ENCODE measurements at regions of chr1 and their contacts with region 1.

Region 1: DNA sequence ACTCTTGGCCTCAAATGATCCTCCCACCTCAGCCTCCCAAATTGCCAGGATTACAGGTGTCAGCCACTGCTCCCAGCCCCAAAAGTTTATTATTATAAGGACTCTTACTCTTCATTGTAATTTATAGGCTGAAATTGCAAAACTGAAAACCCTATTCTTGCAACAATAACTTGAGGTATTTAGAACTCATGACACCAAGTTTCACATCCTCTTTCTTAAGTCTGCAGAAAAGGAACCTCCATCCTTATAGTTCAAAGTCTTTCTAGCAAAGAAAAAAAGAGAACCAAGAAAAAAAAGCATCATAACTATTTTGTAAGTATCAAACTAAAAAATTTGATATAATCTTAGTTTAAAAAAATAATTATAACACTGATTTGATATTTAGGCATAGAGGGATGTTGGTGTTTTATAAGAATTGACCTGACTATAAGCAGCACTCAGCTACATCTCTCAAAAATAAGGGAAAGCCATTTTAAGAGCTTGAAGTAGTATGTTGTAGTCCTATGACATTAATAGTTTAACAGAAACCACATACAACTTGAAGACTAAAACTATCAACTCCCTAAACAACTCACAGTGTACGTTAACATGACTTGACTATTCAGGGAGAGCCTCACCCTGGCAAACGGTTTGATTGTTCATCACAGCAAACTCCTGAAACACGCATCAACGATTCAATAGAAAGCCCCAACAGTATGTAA is 122.4 kb downstream of the AKT3 start:
- DNase-seq: peak; percentile 66
- ATAC-seq: peak; percentile 90
- H3K4me3 ChIP-seq: peak overlapping the region; percentile 29; the same call in 1 of the 2 replicates
- H3K27ac ChIP-seq: peak overlapping the region; percentile 74
- H3K4me1 ChIP-seq: peaks cover 42% of the 10 kb centered on the region
- H3K27me3 ChIP-seq: no peaks in the 10 kb centered on the region
- CTCF ChIP-seq: no peak
- EP300 ChIP-seq: peak; percentile 74 to 78; a peak in 3 of 4 replicates
- POLR2A ChIP-seq: no peak
- RAD21 ChIP-seq: no peak

Region 2: DNA sequence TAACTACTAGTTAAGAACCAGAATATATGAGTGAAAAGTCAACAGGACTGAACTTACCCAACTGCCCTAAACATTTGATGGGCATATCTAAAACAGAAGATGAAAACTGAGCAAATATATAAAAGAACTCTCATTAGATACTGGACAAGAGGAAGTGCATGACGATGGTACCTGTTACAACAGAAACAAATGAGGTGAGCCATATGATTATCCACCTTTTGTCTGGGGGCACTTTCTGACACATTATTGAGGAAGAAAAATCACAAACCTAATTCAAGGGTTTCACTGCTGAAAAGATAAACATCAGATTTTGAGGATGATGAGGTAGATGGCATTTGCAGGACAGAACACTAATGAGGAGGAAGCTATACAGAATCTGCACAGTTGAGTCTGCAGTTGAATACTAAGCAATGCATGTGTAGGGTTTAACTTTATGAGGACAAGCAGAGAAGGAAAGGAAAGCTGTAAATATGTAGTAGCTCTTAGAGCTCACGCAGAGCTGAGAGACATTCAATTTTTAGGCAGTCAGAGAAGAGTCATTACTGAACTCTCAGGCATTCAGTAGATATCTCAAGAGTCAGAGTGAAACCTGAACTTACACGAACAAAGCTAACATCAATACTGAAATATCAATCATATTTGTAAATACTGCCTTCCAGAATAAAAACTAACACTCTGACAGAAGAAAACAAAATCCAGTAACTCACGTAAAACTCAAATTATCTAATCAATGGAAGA is 139.7 kb before region 1 on chr1:
- CTCF ChIA-PET with region 1: no interaction called
- POLR2A ChIA-PET with region 1: no interaction called
- RAD21 ChIA-PET with region 1: no interaction called
- SMC1A ChIA-PET with region 1: no interaction called
- in situ Hi-C with region 1: no loop called
- intact Hi-C with region 1: loop called (anchors 5 kb)
- DNase-seq: peak; percentile 60
- ATAC-seq: peak; percentile 90
- H3K4me3 ChIP-seq: no peak overlapping the region
- H3K27ac ChIP-seq: peak overlapping the region; percentile 65
- H3K4me1 ChIP-seq: peaks cover 19% of the 10 kb centered on the region
- H3K27me3 ChIP-seq: no peaks in the 10 kb centered on the region
- CTCF ChIP-seq: no peak
- EP300 ChIP-seq: no peak
- POLR2A ChIP-seq: no peak
- RAD21 ChIP-seq: no peak

Region 3: GRCh38 chr1:243598433-243598832 is 129.2 kb before region 1 on chr1:
- CTCF ChIA-PET with region 1: no interaction called
- POLR2A ChIA-PET with region 1: no interaction called
- RAD21 ChIA-PET with region 1: no interaction called
- SMC1A ChIA-PET with region 1: no interaction called
- in situ Hi-C with region 1: no loop called
- intact Hi-C with region 1: no loop called
- DNase-seq: no peak
- ATAC-seq: no peak
- H3K4me3 ChIP-seq: no peak overlapping the region
- H3K27ac ChIP-seq: no peak overlapping the region
- H3K4me1 ChIP-seq: peaks cover 14% of the 10 kb centered on the region; the same call in 1 of the 2 replicates
- H3K27me3 ChIP-seq: no peaks in the 10 kb centered on the region
- CTCF ChIP-seq: no peak
- EP300 ChIP-seq: no peak
- POLR2A ChIP-seq: no peak
- RAD21 ChIP-seq: no peak

Region 4: DNA sequence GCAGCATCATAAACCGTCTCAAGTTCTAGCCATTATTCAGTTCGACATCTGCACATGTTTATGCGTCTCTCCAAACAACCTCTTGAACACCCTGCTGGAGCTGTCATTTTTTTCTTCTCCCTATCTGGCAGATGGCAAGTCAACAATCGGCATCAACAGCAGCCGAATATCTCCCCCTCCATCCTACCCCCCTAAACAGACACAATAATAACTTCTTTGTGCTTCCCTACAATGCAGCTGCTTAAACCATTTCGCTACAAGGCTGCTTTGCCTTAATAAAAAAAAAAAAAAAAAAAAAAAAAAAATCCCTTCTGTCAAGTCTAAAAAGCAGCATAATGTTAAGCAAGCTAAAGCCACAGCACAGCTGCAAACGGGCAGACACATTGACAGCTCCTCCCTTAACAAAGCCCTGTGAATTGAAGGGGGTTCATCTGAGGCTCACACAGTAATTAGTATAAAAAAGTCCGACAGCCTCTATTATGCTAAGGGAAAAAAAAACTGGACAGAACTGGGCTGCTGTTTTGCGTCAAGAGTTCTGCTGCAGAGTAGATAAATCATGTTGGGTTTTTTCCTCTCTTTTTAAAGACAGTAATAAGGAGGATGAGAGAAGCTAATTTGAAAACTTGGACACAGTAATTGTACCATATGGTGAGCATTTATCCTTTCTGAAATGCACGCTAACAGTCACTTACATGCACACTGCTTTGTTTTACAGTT is 14.0 kb before region 1 on chr1:
- CTCF ChIA-PET with region 1: interaction called, 9 read pairs
- POLR2A ChIA-PET with region 1: interaction called, 3 read pairs
- RAD21 ChIA-PET with region 1: interaction called, 4 read pairs
- SMC1A ChIA-PET with region 1: interaction called, 25 read pairs
- in situ Hi-C with region 1: no loop called
- intact Hi-C with region 1: no loop called
- DNase-seq: no peak
- ATAC-seq: no peak
- H3K4me3 ChIP-seq: no peak overlapping the region
- H3K27ac ChIP-seq: no peak overlapping the region
- H3K4me1 ChIP-seq: no peaks in the 10 kb centered on the region
- H3K27me3 ChIP-seq: no peaks in the 10 kb centered on the region
- CTCF ChIP-seq: no peak
- EP300 ChIP-seq: no peak
- POLR2A ChIP-seq: no peak
- RAD21 ChIP-seq: no peak

Region 5: DNA sequence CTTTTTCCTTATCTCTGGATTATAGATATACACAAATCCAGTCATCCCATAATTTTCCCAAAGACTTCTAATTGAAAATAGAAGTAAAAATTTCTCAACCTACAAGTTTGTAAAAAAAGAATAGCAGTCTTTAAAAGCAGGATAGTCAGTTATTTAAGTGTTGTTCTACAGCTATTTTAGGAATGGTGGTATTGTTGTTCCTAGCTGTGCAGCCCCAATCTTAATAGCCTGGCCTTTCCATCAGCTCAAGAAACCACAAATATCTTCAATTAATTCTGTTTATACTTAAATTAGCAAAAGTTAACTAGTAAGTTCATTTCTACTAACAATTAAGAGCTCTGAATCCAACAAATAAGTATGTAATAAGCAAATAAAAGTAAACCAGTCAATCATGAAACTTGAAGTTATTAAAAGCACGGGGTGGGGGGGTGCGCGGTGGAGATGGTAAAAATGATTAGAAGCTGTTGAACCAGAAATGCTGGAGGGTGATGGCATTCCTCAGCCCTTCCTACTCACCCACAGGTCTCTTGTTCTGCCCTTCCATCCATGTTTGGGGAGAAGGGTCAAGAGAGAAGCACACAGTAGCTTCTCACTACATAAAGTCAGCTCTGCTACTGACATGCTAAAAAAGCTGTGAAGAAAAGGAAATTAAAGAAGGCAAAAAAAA is 58.7 kb after region 1 on chr1:
- CTCF ChIA-PET with region 1: no interaction called
- POLR2A ChIA-PET with region 1: no interaction called
- RAD21 ChIA-PET with region 1: no interaction called
- SMC1A ChIA-PET with region 1: no interaction called
- in situ Hi-C with region 1: no loop called
- intact Hi-C with region 1: no loop called
- DNase-seq: no peak
- ATAC-seq: no peak
- H3K4me3 ChIP-seq: no peak overlapping the region
- H3K27ac ChIP-seq: no peak overlapping the region
- H3K4me1 ChIP-seq: no peaks in the 10 kb centered on the region
- H3K27me3 ChIP-seq: no peaks in the 10 kb centered on the region
- CTCF ChIP-seq: no peak
- EP300 ChIP-seq: no peak
- POLR2A ChIP-seq: no peak
- RAD21 ChIP-seq: no peak

Region 6: DNA sequence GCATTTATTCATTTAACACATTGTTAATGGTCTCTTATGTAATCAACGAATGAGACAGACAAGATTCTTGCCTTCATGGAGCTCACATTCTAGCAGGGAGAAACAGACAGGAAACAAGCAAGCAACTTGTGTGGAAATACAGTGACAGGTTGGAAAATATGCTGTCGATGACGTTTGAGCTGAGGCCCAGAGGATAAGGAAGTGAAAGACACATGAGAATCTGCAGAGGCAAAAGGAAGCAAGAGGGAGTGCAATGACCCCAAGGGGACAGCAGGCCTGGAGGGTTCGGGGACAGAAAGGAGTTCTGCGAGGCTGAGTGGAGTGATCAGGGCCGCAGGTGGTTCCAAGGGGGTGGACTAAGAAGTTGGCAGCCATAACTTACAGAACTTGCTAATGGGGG is 183.0 kb after region 1 on chr1:
- CTCF ChIA-PET with region 1: no interaction called
- POLR2A ChIA-PET with region 1: no interaction called
- RAD21 ChIA-PET with region 1: no interaction called
- SMC1A ChIA-PET with region 1: no interaction called
- in situ Hi-C with region 1: no loop called
- intact Hi-C with region 1: no loop called
- DNase-seq: no peak
- ATAC-seq: peak; percentile 27; the same call in 2 of the 3 replicates
- H3K4me3 ChIP-seq: no peak overlapping the region
- H3K27ac ChIP-seq: no peak overlapping the region
- H3K4me1 ChIP-seq: no peaks in the 10 kb centered on the region
- H3K27me3 ChIP-seq: no peaks in the 10 kb centered on the region; a peak in 1 of 4 replicates
- CTCF ChIP-seq: no peak
- EP300 ChIP-seq: no peak
- POLR2A ChIP-seq: no peak
- RAD21 ChIP-seq: no peak

Region 7: DNA sequence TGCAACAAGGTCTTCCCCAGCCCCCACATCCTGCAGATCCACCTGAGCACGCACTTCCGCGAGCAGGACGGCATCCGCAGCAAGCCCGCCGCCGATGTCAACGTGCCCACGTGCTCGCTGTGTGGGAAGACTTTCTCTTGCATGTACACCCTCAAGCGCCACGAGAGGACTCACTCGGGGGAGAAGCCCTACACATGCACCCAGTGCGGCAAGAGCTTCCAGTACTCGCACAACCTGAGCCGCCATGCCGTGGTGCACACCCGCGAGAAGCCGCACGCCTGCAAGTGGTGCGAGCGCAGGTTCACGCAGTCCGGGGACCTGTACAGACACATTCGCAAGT is 327.2 kb after region 1 on chr1:
- CTCF ChIA-PET with region 1: no interaction called
- POLR2A ChIA-PET with region 1: no interaction called
- RAD21 ChIA-PET with region 1: no interaction called
- SMC1A ChIA-PET with region 1: no interaction called
- in situ Hi-C with region 1: no loop called
- intact Hi-C with region 1: no loop called
- DNase-seq: no peak
- ATAC-seq: no peak
- H3K4me3 ChIP-seq: no peak overlapping the region
- H3K27ac ChIP-seq: no peak overlapping the region
- H3K4me1 ChIP-seq: peaks cover 15% of the 10 kb centered on the region
- H3K27me3 ChIP-seq: no peaks in the 10 kb centered on the region
- CTCF ChIP-seq: no peak
- EP300 ChIP-seq: no peak
- POLR2A ChIP-seq: no peak
- RAD21 ChIP-seq: no peak

Measured in GM12878 (cell line).